ENCODE measurements at regions of chr16 and their contacts with region 1.

Region 1: GRCh38 chr16:11530171-11530940 is 56.4 kb downstream of the LITAF start:
- DNase-seq: no peak
- H3K4me3 Mint-ChIP-seq: no peak overlapping the region
- H3K27ac Mint-ChIP-seq: no peak overlapping the region
- H3K4me1 Mint-ChIP-seq: peaks cover 7% of the 10 kb centered on the region
- H3K27me3 Mint-ChIP-seq: peaks cover 26% of the 10 kb centered on the region

Region 2: DNA sequence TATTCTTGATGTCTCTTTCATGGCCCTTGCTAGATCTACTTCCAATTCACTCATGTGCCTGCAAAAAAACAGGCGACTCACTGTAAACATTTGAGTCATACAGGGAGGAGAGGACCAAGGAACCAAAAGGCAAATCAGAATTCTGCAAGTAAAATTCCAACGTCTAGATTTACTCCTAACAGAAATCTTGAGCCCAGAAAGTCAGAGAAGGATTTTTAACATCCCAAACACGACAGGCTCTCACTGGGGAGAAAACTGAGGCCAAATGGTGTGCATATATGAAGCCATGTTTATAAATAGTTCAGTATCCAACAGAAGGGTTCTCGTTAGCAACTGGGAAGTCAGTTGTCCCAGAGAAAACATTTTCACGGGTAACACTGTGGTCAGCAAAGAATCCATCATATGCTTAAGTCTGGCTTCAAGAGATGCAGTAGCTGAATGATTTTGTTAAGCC is 16.3 kb after region 1 on chr16:
- CTCF ChIA-PET with region 1: interaction called, 13 read pairs
- DNase-seq: no peak
- H3K4me3 Mint-ChIP-seq: no peak overlapping the region
- H3K27ac Mint-ChIP-seq: no peak overlapping the region
- H3K4me1 Mint-ChIP-seq: peaks cover 11% of the 10 kb centered on the region
- H3K27me3 Mint-ChIP-seq: peaks cover 4% of the 10 kb centered on the region

Region 3: DNA sequence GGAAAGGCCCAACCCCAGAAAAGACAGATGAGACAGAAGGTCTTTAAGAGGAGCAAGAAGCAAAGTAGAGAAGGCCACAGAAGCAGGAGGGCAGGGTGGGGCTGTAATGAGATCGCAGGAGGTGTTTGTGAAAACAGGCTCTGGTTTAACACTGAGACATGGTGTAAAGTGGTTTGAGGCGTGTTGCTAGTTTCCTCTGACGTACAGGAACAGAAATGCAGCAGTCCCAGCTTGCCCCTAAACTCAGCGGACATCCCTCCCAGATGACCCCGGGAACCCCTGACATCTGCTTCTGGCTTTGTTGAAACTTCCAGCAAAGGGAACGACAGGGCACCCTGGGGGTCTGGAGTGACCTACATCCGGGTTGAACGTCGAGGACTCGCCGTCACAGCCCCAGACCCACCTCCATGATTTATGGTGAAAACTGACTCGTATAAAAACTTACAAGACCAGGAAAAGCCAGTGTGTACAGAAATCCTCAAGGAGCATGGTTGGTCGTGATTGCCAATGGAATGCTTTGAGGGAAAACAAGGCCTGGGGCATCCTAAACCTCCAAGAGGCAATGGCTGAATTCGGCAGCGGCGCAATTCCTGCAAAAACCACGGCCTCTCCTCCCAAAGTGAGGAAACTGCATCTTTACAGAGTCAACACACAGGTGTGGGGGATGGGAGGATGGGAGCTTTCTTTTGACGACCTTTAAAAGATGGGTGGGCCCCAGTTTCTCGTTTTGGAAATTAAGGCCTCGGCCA is 30.5 kb after region 1 on chr16:
- CTCF ChIA-PET with region 1: interaction called, 28 read pairs
- DNase-seq: peak; percentile 84
- H3K4me3 Mint-ChIP-seq: peak overlapping the region; percentile 68
- H3K27ac Mint-ChIP-seq: peak overlapping the region; percentile 94
- H3K4me1 Mint-ChIP-seq: peaks cover 91% of the 10 kb centered on the region
- H3K27me3 Mint-ChIP-seq: no peaks in the 10 kb centered on the region

Region 4: DNA sequence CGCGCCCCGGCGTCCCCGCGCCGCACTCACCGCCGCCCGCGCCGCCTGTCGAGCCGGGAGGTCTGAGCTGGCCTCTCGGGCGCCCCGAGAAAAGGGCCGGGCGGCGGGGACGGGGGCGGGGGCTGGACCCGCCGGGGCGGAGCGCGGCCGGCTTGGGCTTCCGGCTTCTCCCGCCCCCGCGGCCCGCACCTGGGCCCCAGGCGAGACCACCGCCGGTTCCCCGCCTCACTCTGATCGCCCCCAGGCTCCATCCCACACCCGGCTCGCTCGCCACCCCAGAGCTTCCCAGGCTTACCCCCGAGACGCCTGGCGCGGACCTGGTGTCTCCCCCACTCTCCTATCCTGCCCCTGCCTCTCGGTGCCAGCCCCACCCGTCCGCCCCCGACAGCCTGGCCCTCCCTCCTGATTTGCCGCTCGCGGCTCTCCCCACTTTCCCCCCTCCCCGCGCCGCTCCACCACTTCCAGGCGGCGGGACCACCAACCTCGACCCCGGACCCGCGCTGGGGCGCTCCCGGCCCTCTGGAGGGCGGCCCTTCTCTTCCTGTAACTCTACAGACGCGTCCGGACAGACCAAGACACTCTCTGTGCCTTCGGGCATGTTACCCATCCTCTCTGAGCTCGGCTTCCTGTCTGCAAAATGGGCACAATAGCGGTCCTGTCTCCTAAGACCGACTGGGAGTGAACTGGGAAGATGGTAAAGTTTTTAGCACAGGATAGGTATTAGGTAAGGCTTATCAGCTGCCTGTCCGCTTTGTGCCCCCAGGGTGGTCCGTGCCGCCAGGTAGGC is 56.7 kb after region 1 on chr16 and contains the start of gene LITAF:
- CTCF ChIA-PET with region 1: interaction called, 17 read pairs
- DNase-seq: peak; percentile 75
- H3K4me3 Mint-ChIP-seq: peak within 1 kb of the TSS; percentile 99
- H3K27ac Mint-ChIP-seq: peak within 1 kb of the TSS; percentile 94
- H3K4me1 Mint-ChIP-seq: peaks cover 42% of the 10 kb centered on the region
- H3K27me3 Mint-ChIP-seq: peaks cover 32% of the 10 kb centered on the region

Region 5: GRCh38 chr16:11651796-11652195 is 121.4 kb after region 1 on chr16:
- CTCF ChIA-PET with region 1: interaction called, 12 read pairs
- DNase-seq: no peak
- H3K4me3 Mint-ChIP-seq: no peak overlapping the region
- H3K27ac Mint-ChIP-seq: no peak overlapping the region
- H3K4me1 Mint-ChIP-seq: peaks cover 18% of the 10 kb centered on the region
- H3K27me3 Mint-ChIP-seq: peaks cover 40% of the 10 kb centered on the region

Region 6: GRCh38 chr16:11715246-11715947 is 185.0 kb after region 1 on chr16:
- CTCF ChIA-PET with region 1: interaction called, 26 read pairs
- DNase-seq: no peak
- H3K4me3 Mint-ChIP-seq: no peak overlapping the region
- H3K27ac Mint-ChIP-seq: no peak overlapping the region
- H3K4me1 Mint-ChIP-seq: peaks cover 5% of the 10 kb centered on the region
- H3K27me3 Mint-ChIP-seq: no peaks in the 10 kb centered on the region